AG04449 (cell line): ENCODE measurements at regions of chr7 and their contacts with region 1.

Region 1: GRCh38 chr7:96075510-96076349 is 246.2 kb downstream of the SLC25A13 start:
- DNase-seq: no peak
- H3K4me3 ChIP-seq: peak overlapping the region; percentile 59
- CTCF ChIP-seq: peak; percentile 86

Region 2: GRCh38 chr7:95993380-95993779 is 82.3 kb before region 1 on chr7:
- CTCF ChIA-PET with region 1: no interaction called
- POLR2A ChIA-PET with region 1: no interaction called
- DNase-seq: no peak
- H3K4me3 ChIP-seq: no peak overlapping the region
- CTCF ChIP-seq: no peak

Region 3: DNA sequence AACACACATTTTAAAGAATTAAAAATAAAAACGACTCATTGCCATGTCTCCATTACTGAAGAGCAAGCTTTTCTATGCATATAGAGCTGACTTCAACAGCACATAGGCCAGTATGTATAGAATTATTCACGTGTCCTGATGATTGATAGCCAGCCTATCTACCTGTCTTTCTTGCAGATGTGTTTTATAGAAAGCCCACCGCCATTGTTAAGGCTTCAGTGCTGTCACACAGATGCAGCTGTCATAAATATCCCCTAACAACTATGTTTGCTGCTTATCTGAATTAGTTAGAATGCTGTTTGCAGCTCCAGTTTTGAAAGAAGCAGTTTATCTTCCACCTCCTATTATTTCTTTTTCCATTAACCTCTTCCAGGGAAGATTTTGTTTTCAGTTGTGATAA is 10.2 kb after region 1 on chr7:
- CTCF ChIA-PET with region 1: interaction called, 10 read pairs
- POLR2A ChIA-PET with region 1: no interaction called
- DNase-seq: no peak
- H3K4me3 ChIP-seq: no peak overlapping the region
- CTCF ChIP-seq: no peak

Region 4: DNA sequence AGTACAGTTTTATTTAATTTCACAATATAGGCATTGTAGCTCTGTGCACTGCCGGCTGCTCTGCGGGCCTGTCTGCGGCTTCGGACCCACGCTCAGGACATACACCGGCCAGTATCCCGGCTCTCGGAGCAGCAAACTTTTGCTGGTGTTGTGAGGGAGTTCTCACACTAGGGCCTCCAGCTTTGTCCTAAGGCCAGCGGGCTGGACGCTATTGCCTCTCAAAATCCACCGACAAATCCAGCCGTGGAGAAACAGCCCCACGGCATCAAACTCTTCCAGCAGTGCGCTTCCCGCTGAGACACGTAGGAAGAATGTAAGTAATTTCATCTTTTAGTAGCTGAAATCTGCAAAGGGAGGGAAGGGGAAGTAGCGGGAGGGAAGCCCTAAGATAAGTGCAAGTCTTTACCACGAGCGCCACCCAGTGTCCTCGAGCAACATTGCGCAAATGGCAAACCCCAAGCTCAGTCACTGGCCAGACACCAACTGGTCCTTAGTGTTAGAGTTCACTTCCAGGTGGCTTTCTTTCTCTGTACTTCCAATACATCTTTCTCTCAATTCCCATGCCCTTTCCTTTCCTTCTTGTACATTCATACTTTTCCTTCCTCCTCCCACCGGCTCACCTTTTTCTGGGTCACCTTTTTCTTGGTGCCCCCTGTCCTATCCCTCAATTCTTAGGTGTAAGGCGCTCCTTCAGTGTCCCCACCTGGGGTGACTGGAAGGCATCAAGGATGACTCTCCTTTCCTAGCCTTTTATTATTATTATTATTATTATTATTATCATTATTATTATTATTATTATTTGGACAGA is 951.9 kb after region 1 on chr7:
- CTCF ChIA-PET with region 1: interaction called, 41 read pairs
- POLR2A ChIA-PET with region 1: no interaction called
- DNase-seq: peak; percentile 44
- H3K4me3 ChIP-seq: peak overlapping the region; percentile 21
- CTCF ChIP-seq: peak; percentile 88